ENCODE measurements at regions of chr4 and their contacts with region 1.

Region 1: GRCh38 chr4:38034986-38035882 is 75.0 kb downstream of the PTTG2 start:
- DNase-seq: no peak
- ATAC-seq: peak in 2 of 4 donors; percentile 59 to 82
- H3K4me3 ChIP-seq: no peak overlapping the region
- H3K27ac ChIP-seq: no peak overlapping the region
- H3K4me1 ChIP-seq: no peaks in the 10 kb centered on the region
- H3K27me3 ChIP-seq: no peaks in the 10 kb centered on the region
- CTCF ChIP-seq: peak; percentile 67

Region 2: DNA sequence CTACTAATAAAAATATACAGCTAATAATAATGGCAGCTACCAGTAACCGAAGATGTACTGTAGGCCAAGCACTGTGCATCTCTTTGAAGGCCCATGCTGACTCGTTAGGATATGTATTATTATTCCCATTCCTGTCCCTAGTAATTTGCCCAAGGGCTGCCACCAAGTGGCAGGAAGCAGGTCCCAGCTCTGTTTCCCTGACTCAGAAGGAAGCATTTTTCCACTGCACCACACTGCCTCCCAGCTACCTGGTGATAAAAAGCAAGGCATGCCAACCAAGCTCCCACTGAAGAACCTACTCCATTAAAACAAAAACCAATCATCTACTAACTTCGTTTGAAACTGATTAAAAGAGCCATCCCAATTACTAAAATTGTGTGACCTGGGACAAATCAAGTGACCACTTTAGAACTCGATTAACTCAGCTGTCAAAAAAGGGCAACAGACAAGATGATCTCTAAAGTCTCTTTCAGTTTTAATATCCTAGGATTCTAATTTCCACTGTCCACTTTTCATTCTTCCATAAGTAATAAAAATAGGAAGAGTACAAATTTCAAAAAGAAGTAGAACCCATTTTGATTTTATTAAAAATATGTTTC is 233.1 kb before region 1 on chr4:
- intact Hi-C with region 1: loop called (anchors 2 kb)
- DNase-seq: peak in 1 of 2 donors; percentile 25
- ATAC-seq: peak; percentile 80 to 92 (median 88)
- H3K4me3 ChIP-seq: no peak overlapping the region
- H3K27ac ChIP-seq: no peak overlapping the region
- H3K4me1 ChIP-seq: no peaks in the 10 kb centered on the region
- H3K27me3 ChIP-seq: no peaks in the 10 kb centered on the region
- CTCF ChIP-seq: peak; percentile 60

Region 3: DNA sequence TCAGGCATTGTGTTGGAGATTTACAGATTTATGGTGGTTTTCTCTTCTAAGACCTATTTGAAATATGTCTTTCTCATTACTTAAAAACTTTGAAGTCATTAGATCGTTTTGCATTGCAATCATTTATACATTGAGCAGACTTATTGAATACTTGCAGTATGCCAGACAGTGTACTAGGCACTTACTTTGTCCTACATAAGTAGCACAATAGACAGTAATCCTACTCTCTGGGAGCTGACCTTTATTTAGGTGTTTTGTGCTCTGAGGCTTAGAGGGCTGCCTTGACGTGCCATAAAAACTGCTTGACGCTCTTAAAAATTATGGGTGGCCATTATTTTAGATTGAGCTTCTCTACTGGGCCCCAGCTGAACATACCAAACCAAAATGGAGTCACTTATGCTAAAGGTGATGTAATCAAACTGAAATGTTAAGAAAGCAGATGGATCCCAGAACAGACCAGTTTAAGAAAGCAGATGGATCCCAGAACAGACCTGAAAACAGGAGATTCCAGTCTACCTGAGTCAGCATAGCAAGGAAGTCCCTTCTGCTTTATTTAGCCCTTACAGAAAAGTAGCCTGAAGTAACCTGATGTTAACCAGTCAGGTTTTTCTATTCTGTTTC is 32.7 kb before region 1 on chr4:
- intact Hi-C with region 1: no loop called
- DNase-seq: no peak
- ATAC-seq: peak in 2 of 4 donors; percentile 30 to 41
- H3K4me3 ChIP-seq: no peak overlapping the region
- H3K27ac ChIP-seq: no peak overlapping the region
- H3K4me1 ChIP-seq: peaks cover 6% of the 10 kb centered on the region
- H3K27me3 ChIP-seq: no peaks in the 10 kb centered on the region
- CTCF ChIP-seq: no peak

Region 4: GRCh38 chr4:38068107-38068506 is 32.9 kb after region 1 on chr4:
- intact Hi-C with region 1: no loop called
- DNase-seq: no peak
- ATAC-seq: no peak
- H3K4me3 ChIP-seq: no peak overlapping the region
- H3K27ac ChIP-seq: peak overlapping the region; percentile 2
- H3K4me1 ChIP-seq: no peaks in the 10 kb centered on the region
- H3K27me3 ChIP-seq: no peaks in the 10 kb centered on the region
- CTCF ChIP-seq: no peak

Region 5: GRCh38 chr4:38078590-38079421 is 43.6 kb after region 1 on chr4:
- intact Hi-C with region 1: no loop called
- DNase-seq: no peak
- ATAC-seq: no peak
- H3K4me3 ChIP-seq: no peak overlapping the region
- H3K27ac ChIP-seq: peak overlapping the region; percentile 10
- H3K4me1 ChIP-seq: peaks cover 6% of the 10 kb centered on the region
- H3K27me3 ChIP-seq: no peaks in the 10 kb centered on the region
- CTCF ChIP-seq: no peak

Region 6: GRCh38 chr4:38154681-38155608 is 119.7 kb after region 1 on chr4:
- intact Hi-C with region 1: no loop called
- DNase-seq: peak; percentile 28 to 75
- ATAC-seq: peak in 2 of 4 donors; percentile 51 to 63
- H3K4me3 ChIP-seq: no peak overlapping the region
- H3K27ac ChIP-seq: no peak overlapping the region
- H3K4me1 ChIP-seq: no peaks in the 10 kb centered on the region
- H3K27me3 ChIP-seq: no peaks in the 10 kb centered on the region
- CTCF ChIP-seq: no peak

Measured in psoas muscle (tissue), 8 donors.